Endothelial cell of umbilical vein (primary cell): ENCODE measurements at regions of chr9 and their contacts with region 1.

Region 1: DNA sequence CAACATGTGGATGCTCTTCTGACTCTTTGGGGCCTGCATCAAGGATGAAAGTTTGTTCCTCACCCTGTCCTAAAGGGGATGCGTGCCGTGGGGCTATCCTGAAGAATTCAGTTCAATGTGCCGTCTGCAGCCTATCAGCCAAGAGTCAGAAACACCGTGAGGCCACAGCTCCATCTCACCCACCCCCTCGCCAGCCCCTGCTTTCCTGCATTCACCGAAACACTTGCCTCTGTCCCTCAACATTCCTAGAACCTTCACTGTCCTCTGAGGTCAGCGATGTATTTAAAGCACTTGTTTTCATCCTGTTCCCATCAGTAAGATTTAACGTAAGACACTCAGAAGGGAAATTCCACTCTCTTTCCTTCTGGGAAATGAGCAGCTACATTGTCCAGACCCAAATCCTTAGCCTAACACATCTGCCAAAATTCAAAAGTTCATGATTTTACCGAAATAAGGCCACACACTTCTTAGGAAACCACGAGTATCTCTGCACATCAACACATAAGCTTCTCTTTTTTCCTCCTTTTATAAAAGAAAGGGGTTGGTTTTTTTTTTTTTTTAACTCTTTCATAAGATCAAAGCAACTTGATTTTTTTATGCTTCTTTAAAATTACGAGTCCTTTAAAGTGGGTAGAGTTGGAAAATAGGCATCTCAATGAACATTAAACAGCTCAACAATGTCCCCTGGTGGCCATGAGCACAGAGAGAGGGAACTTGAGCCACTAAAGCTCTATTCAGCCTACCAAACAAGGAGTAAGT is 100.7 kb downstream of the SUSD1 start:
- DNase-seq: peak; percentile 93
- H3K4me3 ChIP-seq: no peak overlapping the region
- H3K27ac ChIP-seq: peak overlapping the region; percentile 87
- H3K4me1 ChIP-seq: peaks cover 14% of the 10 kb centered on the region
- H3K27me3 ChIP-seq: no peaks in the 10 kb centered on the region
- CTCF ChIP-seq: peak; percentile 84 to 86
- POLR2A ChIP-seq: no peak

Region 2: DNA sequence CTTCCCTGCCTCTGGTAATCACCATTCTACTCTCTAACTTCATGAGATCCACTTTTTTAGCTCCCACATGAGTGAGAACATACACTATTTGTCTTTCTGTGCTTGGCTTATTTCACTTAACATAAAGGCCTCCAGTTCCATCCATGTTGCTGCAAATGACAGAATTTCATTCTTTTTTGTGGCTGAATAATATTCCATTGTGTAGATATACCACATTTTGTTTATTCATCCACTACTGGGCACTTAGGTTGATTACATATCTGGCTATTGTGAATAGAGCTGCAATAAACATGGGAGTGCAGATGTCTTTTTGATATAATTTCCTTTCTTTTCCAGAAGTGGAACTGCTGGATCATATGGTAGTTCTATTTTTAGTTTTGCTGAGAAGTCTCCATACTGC is 308.4 kb before region 1 on chr9:
- CTCF ChIA-PET with region 1: interaction called, 256 read pairs
- POLR2A ChIA-PET with region 1: no interaction called
- dilution Hi-C with region 1: no loop called
- intact Hi-C with region 1: no loop called
- DNase-seq: no peak
- H3K4me3 ChIP-seq: no peak overlapping the region
- H3K27ac ChIP-seq: no peak overlapping the region
- H3K4me1 ChIP-seq: no peaks in the 10 kb centered on the region
- H3K27me3 ChIP-seq: no peaks in the 10 kb centered on the region
- CTCF ChIP-seq: no peak
- POLR2A ChIP-seq: no peak

Region 3: GRCh38 chr9:111902396-111903147 is 171.9 kb before region 1 on chr9:
- CTCF ChIA-PET with region 1: interaction called, 41 read pairs
- POLR2A ChIA-PET with region 1: interaction called, 3 read pairs
- dilution Hi-C with region 1: no loop called
- intact Hi-C with region 1: no loop called
- DNase-seq: peak; percentile 82
- H3K4me3 ChIP-seq: no peak overlapping the region
- H3K27ac ChIP-seq: peak overlapping the region; percentile 38
- H3K4me1 ChIP-seq: peaks cover 33% of the 10 kb centered on the region
- H3K27me3 ChIP-seq: no peaks in the 10 kb centered on the region
- CTCF ChIP-seq: no peak
- POLR2A ChIP-seq: no peak

Region 4: GRCh38 chr9:111952559-111952958 is 121.9 kb before region 1 on chr9:
- CTCF ChIA-PET with region 1: interaction called, 34 read pairs
- POLR2A ChIA-PET with region 1: interaction called, 4 read pairs
- dilution Hi-C with region 1: no loop called
- intact Hi-C with region 1: no loop called
- DNase-seq: peak; percentile 72
- H3K4me3 ChIP-seq: no peak overlapping the region
- H3K27ac ChIP-seq: peak overlapping the region; percentile 54
- H3K4me1 ChIP-seq: peaks cover 25% of the 10 kb centered on the region
- H3K27me3 ChIP-seq: no peaks in the 10 kb centered on the region
- CTCF ChIP-seq: no peak
- POLR2A ChIP-seq: no peak

Region 5: DNA sequence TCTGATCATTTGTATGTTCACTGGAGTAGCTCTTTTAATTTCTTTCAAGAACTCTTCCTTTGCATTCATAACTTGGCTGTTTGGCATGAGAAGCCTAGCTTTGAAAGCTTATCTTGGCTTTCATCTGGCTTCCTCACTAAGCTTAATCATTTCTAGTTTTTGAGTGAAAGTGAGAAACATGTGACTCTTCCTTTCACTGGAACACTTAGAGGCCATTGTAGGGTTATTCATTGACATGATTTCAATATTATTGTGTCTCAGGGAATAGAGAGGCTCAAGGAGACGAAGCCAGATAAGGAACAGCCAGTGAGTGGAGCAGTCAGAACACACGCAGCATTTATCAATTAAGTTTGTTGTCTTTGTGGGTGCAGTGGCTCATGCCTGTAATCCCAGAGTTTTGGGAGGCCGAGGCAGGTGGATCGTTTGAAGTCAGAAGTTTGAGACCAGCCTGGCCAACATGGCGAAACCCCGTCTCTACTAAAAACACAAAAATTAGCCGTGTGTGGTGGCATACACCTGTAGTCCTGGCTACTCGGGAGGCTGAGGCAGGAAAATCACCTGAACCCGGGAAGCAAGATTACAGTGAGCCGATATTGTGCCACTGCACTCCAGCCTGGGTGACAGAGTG is 79.5 kb before region 1 on chr9:
- CTCF ChIA-PET with region 1: interaction called, 17 read pairs
- POLR2A ChIA-PET with region 1: no interaction called
- dilution Hi-C with region 1: no loop called
- intact Hi-C with region 1: no loop called
- DNase-seq: peak; percentile 87
- H3K4me3 ChIP-seq: no peak overlapping the region
- H3K27ac ChIP-seq: no peak overlapping the region
- H3K4me1 ChIP-seq: peaks cover 4% of the 10 kb centered on the region
- H3K27me3 ChIP-seq: no peaks in the 10 kb centered on the region
- CTCF ChIP-seq: no peak
- POLR2A ChIP-seq: no peak

Region 6: DNA sequence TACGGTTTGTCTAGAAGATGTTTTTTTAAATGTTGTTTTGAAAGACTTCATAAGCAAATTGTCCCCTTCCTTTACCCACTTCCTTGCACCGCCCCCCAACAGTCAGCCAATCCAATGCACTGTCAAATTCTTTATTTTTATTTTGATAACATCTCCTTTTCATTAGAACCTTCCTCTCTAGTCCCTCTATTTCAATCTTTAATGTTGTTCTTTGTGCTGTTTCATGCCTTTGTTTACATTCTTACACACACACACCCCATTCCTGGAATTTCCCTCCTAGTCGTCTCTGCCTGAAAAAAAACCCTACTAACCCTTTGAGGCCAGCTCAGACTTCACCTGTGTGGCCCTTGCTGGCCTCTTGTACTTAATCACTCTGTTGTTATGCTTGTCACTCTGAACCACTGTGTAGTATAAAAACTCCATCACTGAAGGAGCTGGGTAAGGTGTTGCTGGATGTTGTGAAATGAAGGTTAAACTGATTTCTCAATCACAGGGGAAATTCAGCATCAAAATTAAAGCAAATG is 44.4 kb before region 1 on chr9:
- CTCF ChIA-PET with region 1: interaction called, 17 read pairs
- POLR2A ChIA-PET with region 1: no interaction called
- dilution Hi-C with region 1: no loop called
- intact Hi-C with region 1: no loop called
- DNase-seq: peak; percentile 86
- H3K4me3 ChIP-seq: no peak overlapping the region
- H3K27ac ChIP-seq: peak overlapping the region; percentile 52
- H3K4me1 ChIP-seq: peaks cover 29% of the 10 kb centered on the region
- H3K27me3 ChIP-seq: no peaks in the 10 kb centered on the region
- CTCF ChIP-seq: no peak
- POLR2A ChIP-seq: no peak

Region 7: DNA sequence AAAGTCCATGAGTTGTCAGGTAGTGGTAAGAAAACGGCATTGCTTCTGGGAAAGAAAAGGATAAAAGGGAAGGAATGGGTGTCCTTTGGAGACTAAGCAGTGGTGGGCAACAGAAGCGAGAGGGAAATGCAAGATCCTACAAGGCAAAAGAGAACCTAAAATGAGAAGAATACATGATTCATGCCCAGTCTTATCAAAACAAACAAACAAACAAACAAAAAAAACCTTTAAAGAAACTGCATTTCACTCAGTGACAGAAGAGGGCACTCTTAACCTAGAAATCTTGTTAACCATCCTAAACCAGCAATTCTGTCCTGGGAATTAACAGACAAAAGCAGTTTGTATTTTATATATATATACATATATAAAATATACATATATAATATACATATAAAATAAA is 12.2 kb after region 1 on chr9:
- CTCF ChIA-PET with region 1: interaction called, 24 read pairs
- POLR2A ChIA-PET with region 1: no interaction called
- dilution Hi-C with region 1: no loop called
- intact Hi-C with region 1: no loop called
- DNase-seq: peak; percentile 48
- H3K4me3 ChIP-seq: no peak overlapping the region
- H3K27ac ChIP-seq: no peak overlapping the region
- H3K4me1 ChIP-seq: peaks cover 10% of the 10 kb centered on the region
- H3K27me3 ChIP-seq: no peaks in the 10 kb centered on the region
- CTCF ChIP-seq: peak; percentile 21 to 34
- POLR2A ChIP-seq: no peak

Region 8: DNA sequence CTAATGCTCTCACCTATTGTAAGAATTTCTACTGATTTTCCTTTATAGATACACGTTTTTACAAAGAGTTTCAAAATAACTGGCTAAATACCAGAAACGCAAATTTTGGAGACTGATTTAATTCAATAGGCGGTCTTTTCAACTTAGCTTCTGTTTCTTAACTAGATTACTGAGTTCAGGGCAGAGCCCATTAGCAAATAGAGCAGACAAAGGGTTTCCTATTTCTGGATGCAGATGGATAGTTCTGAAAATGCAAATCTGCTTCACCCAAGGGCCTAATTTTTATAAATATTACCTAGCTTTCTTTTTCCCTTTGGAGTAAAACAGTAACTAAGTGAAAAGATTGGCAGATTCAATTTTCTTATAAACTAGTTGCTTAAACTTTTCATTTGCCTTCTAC is 398.6 kb after region 1 on chr9:
- CTCF ChIA-PET with region 1: no interaction called
- POLR2A ChIA-PET with region 1: no interaction called
- dilution Hi-C with region 1: no loop called
- intact Hi-C with region 1: no loop called
- DNase-seq: no peak
- H3K4me3 ChIP-seq: no peak overlapping the region
- H3K27ac ChIP-seq: no peak overlapping the region
- H3K4me1 ChIP-seq: no peaks in the 10 kb centered on the region
- H3K27me3 ChIP-seq: no peaks in the 10 kb centered on the region
- CTCF ChIP-seq: no peak
- POLR2A ChIP-seq: no peak